Calu3 (cell line): ENCODE measurements at regions of chrX and their contacts with region 1.

Region 1: GRCh38 chrX:11381464-11381863 is 88.3 kb downstream of the AMELX start:
- DNase-seq: peak; percentile 55
- H3K4me3 Mint-ChIP-seq: no peak overlapping the region
- H3K27ac Mint-ChIP-seq: no peak overlapping the region
- H3K4me1 Mint-ChIP-seq: peaks cover 12% of the 10 kb centered on the region
- H3K27me3 Mint-ChIP-seq: no peaks in the 10 kb centered on the region
- CTCF ChIP-seq: peak; percentile 49

Region 2: DNA sequence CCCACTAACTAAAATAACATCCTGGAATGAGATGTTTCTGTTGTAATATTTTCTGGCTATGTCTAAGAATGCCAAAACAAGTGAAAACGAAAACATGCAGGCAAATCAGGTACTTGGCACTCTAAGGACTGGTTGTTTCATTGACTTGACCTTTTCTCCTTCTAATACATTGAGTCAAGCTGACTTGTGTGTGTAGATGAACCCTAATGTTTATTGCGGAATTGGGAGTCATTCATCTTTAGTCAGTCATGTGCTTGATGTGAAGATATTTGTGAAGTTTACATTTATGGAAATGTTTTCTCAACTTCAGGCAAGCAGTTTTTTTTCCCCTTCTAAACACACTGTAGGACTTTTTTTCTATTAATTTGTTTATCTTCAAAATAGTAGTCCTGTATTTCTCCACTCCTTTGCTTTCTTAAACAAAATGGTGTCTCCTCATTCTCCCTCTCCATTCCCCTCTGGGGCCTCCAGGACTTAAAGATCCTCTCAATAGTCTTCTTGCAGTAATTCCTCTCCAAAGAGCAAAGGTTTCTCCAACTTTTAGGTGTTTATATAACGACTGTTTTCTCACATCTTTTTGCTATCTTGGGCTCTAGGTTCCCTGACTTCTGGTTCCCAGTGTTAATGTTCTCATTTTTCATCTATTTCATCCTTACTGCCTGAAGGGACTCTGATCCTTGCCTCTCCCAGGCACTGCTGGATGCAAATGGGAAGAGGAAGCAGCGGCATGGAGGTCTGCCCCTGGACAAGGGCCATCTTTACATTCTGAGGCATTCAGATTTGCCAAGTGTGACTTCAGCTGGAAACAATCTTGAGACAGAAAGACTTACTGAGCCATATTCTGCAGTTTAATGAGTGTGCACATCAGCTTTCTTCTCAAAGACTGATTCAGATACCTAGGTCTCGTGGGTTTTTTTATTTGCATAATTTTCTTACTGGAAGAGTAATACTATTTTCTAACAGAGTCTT is 117.9 kb after region 1 on chrX:
- CTCF ChIA-PET with region 1: no interaction called
- intact Hi-C with region 1: loop called (anchors 10 kb)
- DNase-seq: no peak
- H3K4me3 Mint-ChIP-seq: no peak overlapping the region
- H3K27ac Mint-ChIP-seq: no peak overlapping the region
- H3K4me1 Mint-ChIP-seq: no peaks in the 10 kb centered on the region
- H3K27me3 Mint-ChIP-seq: no peaks in the 10 kb centered on the region
- CTCF ChIP-seq: no peak

Region 3: GRCh38 chrX:11509786-11510185 is 128.3 kb after region 1 on chrX:
- CTCF ChIA-PET with region 1: no interaction called
- intact Hi-C with region 1: no loop called
- DNase-seq: no peak
- H3K4me3 Mint-ChIP-seq: no peak overlapping the region
- H3K27ac Mint-ChIP-seq: no peak overlapping the region
- H3K4me1 Mint-ChIP-seq: no peaks in the 10 kb centered on the region
- H3K27me3 Mint-ChIP-seq: no peaks in the 10 kb centered on the region
- CTCF ChIP-seq: no peak